ENCODE measurements at regions of chrX and their contacts with region 1.

Region 1: DNA sequence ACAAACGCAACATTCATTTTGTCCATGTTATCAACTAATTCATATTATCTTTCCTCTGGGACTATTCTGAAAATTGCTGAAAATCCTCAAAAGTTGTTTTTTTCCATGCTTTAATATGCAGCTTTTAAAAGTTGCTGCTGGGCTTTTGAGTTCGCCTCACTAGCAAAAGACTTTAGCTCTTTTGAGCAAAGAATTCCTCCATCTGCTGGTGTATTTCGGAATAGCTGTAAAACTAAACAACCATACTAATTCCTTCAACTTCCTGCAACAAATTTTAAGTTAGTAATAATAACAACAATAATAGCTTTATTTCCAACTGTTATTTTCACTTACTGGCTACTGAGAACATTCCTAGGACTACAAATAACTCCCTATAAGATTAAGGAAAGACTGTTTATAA is 124.5 kb upstream of the PLAC1 start:
- DNase-seq: no peak
- ATAC-seq: no peak
- H3K4me3 ChIP-seq: no peak overlapping the region
- H3K27ac ChIP-seq: no peak overlapping the region
- H3K4me1 ChIP-seq: no peaks in the 10 kb centered on the region
- H3K27me3 ChIP-seq: peaks cover 0 to 21% (median 0%) of the 10 kb centered on the region in 7 donors
- CTCF ChIP-seq: peak; percentile 21 to 68 (median 55)

Region 2: GRCh38 chrX:134520860-134521390 is 261.9 kb before region 1 on chrX:
- intact Hi-C with region 1: loop called in 1 of 10 experiments (anchors 10 kb)
- DNase-seq: peak in 1 of 2 donors; percentile 22
- ATAC-seq: peak in 7 of 8 donors; percentile 56 to 72 (median 67)
- H3K4me3 ChIP-seq: no peak overlapping the region
- H3K27ac ChIP-seq: no peak overlapping the region
- H3K4me1 ChIP-seq: no peaks in the 10 kb centered on the region
- H3K27me3 ChIP-seq: no peaks in the 10 kb centered on the region
- CTCF ChIP-seq: peak; percentile 24 to 68 (median 58)

Region 3: DNA sequence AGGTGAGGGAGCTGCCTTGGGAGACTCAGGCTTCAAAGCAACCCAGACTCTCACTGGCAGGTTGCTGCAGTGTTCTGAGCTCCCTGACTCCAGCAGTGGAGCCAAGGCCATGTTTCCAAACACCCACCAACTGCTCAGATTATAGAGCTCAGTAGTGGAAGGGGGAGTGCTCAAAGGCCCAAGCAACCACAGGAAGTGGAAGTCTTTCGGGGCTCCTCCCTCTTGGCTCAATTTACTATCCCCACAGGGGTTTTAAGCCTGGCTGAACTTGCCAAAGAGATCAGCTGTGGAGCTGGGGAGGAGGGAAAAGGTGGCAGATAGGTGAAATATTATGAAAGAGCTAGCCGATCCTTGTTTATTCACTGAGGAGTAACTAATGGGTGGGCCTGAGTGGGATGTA is 240.3 kb before region 1 on chrX:
- intact Hi-C with region 1: no loop called
- DNase-seq: peak in 1 of 2 donors; percentile 25
- ATAC-seq: peak; percentile 18 to 77 (median 66)
- H3K4me3 ChIP-seq: no peak overlapping the region
- H3K27ac ChIP-seq: no peak overlapping the region
- H3K4me1 ChIP-seq: peaks cover 0 to 38% (median 0%) of the 10 kb centered on the region in 9 donors
- H3K27me3 ChIP-seq: peaks cover 0 to 45% (median 13%) of the 10 kb centered on the region in 7 donors
- CTCF ChIP-seq: no peak

Measured in heart right ventricle (tissue), 16 donors.